PC-3 (cell line): ENCODE measurements at regions of chr18 and their contacts with region 1.

Region 1: GRCh38 chr18:71808616-71809015 is 735.5 kb downstream of the CBLN2 start:
- DNase-seq: peak; percentile 74
- ATAC-seq: peak; percentile 96
- H3K4me3 ChIP-seq: no peak overlapping the region
- H3K27ac ChIP-seq: peak overlapping the region; percentile 44
- H3K4me1 ChIP-seq: peaks cover 21% of the 10 kb centered on the region
- H3K27me3 ChIP-seq: no peaks in the 10 kb centered on the region
- CTCF ChIP-seq: no peak

Region 2: GRCh38 chr18:71743634-71744033 is 65.0 kb before region 1 on chr18:
- CTCF ChIA-PET with region 1: no interaction called
- POLR2A ChIA-PET with region 1: no interaction called
- intact Hi-C with region 1: loop called (anchors 2 kb)
- DNase-seq: no peak
- ATAC-seq: no peak
- H3K4me3 ChIP-seq: no peak overlapping the region
- H3K27ac ChIP-seq: no peak overlapping the region
- H3K4me1 ChIP-seq: no peaks in the 10 kb centered on the region
- H3K27me3 ChIP-seq: no peaks in the 10 kb centered on the region
- CTCF ChIP-seq: no peak

Region 3: GRCh38 chr18:71831039-71831438 is 22.4 kb after region 1 on chr18:
- CTCF ChIA-PET with region 1: no interaction called
- POLR2A ChIA-PET with region 1: no interaction called
- intact Hi-C with region 1: loop called (anchors 1 kb)
- DNase-seq: peak; percentile 86
- ATAC-seq: peak; percentile 98
- H3K4me3 ChIP-seq: no peak overlapping the region
- H3K27ac ChIP-seq: peak overlapping the region; percentile 30
- H3K4me1 ChIP-seq: peaks cover 15% of the 10 kb centered on the region
- H3K27me3 ChIP-seq: no peaks in the 10 kb centered on the region
- CTCF ChIP-seq: no peak

Region 4: GRCh38 chr18:72107647-72108383 is 299.2 kb after region 1 on chr18:
- CTCF ChIA-PET with region 1: no interaction called
- POLR2A ChIA-PET with region 1: no interaction called
- intact Hi-C with region 1: loop called (anchors 5 kb)
- DNase-seq: peak; percentile 64
- ATAC-seq: peak; percentile 94
- H3K4me3 ChIP-seq: no peak overlapping the region
- H3K27ac ChIP-seq: no peak overlapping the region
- H3K4me1 ChIP-seq: peaks cover 4% of the 10 kb centered on the region; the same call in 1 of the 2 replicates
- H3K27me3 ChIP-seq: no peaks in the 10 kb centered on the region
- CTCF ChIP-seq: no peak

Region 5: GRCh38 chr18:72544092-72544886 is 735.7 kb after region 1 on chr18 and contains the start of gene CBLN2:
- CTCF ChIA-PET with region 1: no interaction called
- POLR2A ChIA-PET with region 1: no interaction called
- intact Hi-C with region 1: no loop called
- DNase-seq: peak; percentile 75
- ATAC-seq: peak; percentile 96
- H3K4me3 ChIP-seq: peak within 1 kb of the TSS; percentile 66
- H3K27ac ChIP-seq: no peak within 1 kb of the TSS
- H3K4me1 ChIP-seq: peaks cover 10% of the 10 kb centered on the region; the same call in 1 of the 2 replicates
- H3K27me3 ChIP-seq: peaks cover 72% of the 10 kb centered on the region
- CTCF ChIP-seq: peak; percentile 71
- total RNA-seq, gene CBLN2: not detected in 2 replicates

Region 6: GRCh38 chr18:73023978-73024377 is 1215.4 kb after region 1 on chr18:
- CTCF ChIA-PET with region 1: no interaction called
- POLR2A ChIA-PET with region 1: no interaction called
- intact Hi-C with region 1: no loop called
- DNase-seq: no peak
- ATAC-seq: peak; percentile 31; the same call in 1 of the 2 replicates
- H3K4me3 ChIP-seq: no peak overlapping the region
- H3K27ac ChIP-seq: no peak overlapping the region
- H3K4me1 ChIP-seq: no peaks in the 10 kb centered on the region
- H3K27me3 ChIP-seq: no peaks in the 10 kb centered on the region
- CTCF ChIP-seq: no peak